ENCODE measurements at regions of chr11 and their contacts with region 1.

Region 1: GRCh38 chr11:96464700-96465307 is 75.0 kb downstream of the JRKL start:
- DNase-seq: peak; percentile 68
- ATAC-seq: peak; percentile 95
- H3K4me3 ChIP-seq: no peak overlapping the region
- H3K27ac ChIP-seq: no peak overlapping the region
- H3K4me1 ChIP-seq: no peaks in the 10 kb centered on the region
- H3K27me3 ChIP-seq: no peaks in the 10 kb centered on the region
- CTCF ChIP-seq: peak; percentile 78
- EP300 ChIP-seq: no peak
- POLR2A ChIP-seq: no peak
- RAD21 ChIP-seq: peak; percentile 24; the same call in 1 of the 2 replicates

Region 2: GRCh38 chr11:95119374-95120060 is 1345.3 kb before region 1 on chr11:
- CTCF ChIA-PET with region 1: no interaction called
- POLR2A ChIA-PET with region 1: no interaction called
- in situ Hi-C with region 1: no loop called
- intact Hi-C with region 1: no loop called
- DNase-seq: peak; percentile 10
- ATAC-seq: no peak
- H3K4me3 ChIP-seq: no peak overlapping the region
- H3K27ac ChIP-seq: no peak overlapping the region
- H3K4me1 ChIP-seq: no peaks in the 10 kb centered on the region
- H3K27me3 ChIP-seq: no peaks in the 10 kb centered on the region
- CTCF ChIP-seq: no peak
- EP300 ChIP-seq: no peak
- POLR2A ChIP-seq: no peak
- RAD21 ChIP-seq: no peak

Region 3: GRCh38 chr11:96307776-96308140 is 157.0 kb before region 1 on chr11:
- CTCF ChIA-PET with region 1: no interaction called
- POLR2A ChIA-PET with region 1: no interaction called
- in situ Hi-C with region 1: no loop called
- intact Hi-C with region 1: no loop called
- DNase-seq: no peak
- ATAC-seq: no peak
- H3K4me3 ChIP-seq: no peak overlapping the region
- H3K27ac ChIP-seq: no peak overlapping the region
- H3K4me1 ChIP-seq: peaks cover 45% of the 10 kb centered on the region
- H3K27me3 ChIP-seq: no peaks in the 10 kb centered on the region
- CTCF ChIP-seq: no peak
- EP300 ChIP-seq: no peak
- POLR2A ChIP-seq: no peak
- RAD21 ChIP-seq: no peak

Region 4: DNA sequence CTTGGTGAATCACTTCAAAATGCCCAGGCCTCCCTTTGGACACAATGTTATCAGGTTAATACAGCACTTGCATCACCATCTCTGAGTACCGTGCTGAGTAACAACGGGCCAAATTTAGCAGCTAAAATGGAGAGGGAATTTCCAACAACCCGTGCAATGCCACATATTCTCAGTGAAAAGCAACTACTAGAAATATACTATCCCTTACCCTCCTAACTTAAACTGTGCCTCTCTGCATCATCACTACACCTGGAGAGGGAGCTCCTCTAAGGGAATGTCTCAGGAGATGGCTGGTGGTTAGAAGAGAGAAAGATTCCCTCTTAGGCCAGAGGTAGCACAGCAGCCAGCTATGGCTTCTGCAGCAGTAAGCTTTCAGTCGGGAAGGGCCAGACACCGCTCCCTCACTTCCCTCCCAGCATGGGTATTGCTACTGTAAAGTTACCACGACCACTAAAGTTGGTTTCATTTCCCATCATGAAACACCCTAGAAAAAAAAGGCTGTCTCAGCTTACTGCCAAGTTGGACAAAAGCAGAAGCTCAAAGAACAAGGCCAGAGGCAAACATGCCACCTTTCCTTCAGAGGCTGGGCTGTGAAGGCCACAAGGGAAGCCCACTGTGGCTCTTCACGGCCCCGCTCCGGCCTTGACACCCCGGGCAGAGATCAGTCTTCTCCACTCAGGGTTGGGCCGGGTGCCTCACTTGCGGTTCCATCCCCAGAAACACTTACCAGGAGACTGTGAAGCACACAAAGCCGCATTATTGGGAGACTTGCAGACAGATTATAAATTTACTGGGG is 125.7 kb before region 1 on chr11:
- CTCF ChIA-PET with region 1: no interaction called
- POLR2A ChIA-PET with region 1: no interaction called
- in situ Hi-C with region 1: no loop called
- intact Hi-C with region 1: no loop called
- DNase-seq: peak; percentile 25
- ATAC-seq: peak; percentile 37
- H3K4me3 ChIP-seq: peak overlapping the region; percentile 59 to 84 (median 77)
- H3K27ac ChIP-seq: peak overlapping the region; percentile 80
- H3K4me1 ChIP-seq: peaks cover 83% of the 10 kb centered on the region
- H3K27me3 ChIP-seq: no peaks in the 10 kb centered on the region; a peak in 1 of 5 replicates
- CTCF ChIP-seq: no peak
- EP300 ChIP-seq: no peak
- POLR2A ChIP-seq: no peak
- RAD21 ChIP-seq: no peak

Region 5: DNA sequence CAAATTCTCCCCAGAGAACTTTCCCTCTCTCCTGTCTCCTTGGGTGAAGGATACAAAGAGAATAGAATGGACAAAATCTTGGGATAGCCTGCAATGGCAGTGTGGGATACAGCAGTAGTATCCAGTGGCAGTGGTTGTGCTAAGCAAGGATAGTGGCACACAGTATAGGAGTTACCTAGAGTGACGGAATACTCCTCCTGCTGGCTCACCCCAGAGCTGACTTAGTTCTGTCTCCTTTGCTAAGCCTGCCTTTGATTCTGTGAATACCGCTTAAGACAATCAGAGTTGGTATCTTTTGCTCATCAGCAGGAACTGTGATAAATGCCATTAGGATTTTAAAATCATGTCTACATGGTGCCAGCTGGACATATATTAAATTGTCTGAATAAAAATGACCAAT is 329.3 kb after region 1 on chr11:
- CTCF ChIA-PET with region 1: no interaction called
- POLR2A ChIA-PET with region 1: no interaction called
- in situ Hi-C with region 1: no loop called
- intact Hi-C with region 1: loop called (anchors 2 kb)
- DNase-seq: no peak
- ATAC-seq: peak; percentile 76
- H3K4me3 ChIP-seq: no peak overlapping the region
- H3K27ac ChIP-seq: no peak overlapping the region
- H3K4me1 ChIP-seq: no peaks in the 10 kb centered on the region
- H3K27me3 ChIP-seq: no peaks in the 10 kb centered on the region
- CTCF ChIP-seq: 0 out of 2 replicates have a peak, but pooled peaks have one; percentile 16
- EP300 ChIP-seq: no peak
- POLR2A ChIP-seq: no peak
- RAD21 ChIP-seq: no peak

Region 6: DNA sequence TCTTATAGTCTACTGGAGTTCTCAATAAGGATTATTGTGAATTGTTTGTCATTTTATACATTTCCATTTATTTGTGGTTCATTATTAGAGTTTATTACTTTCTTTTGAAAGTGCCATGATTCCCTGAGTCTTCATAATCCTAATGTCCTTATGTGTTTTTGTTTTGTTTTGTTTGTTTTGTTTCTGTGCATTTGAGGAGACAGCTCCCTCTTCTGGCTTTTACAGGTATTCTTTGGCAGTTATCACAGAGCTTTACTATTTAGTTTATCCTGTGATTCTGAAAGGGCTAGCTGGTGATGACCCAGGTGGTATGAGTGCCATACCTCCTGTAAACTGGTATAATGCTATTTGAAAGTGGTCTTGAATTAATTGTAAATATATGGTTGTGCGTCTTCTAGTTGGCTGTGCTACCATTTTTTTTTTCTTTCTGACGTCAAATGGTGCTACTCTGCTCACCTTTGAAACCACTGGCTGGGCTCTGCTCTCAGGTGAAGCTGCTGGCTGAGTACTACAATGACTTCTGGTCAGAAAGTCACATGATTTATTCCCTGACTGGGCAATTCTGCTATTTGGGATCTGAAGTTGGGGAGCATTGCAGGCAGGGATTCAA is 676.2 kb after region 1 on chr11:
- CTCF ChIA-PET with region 1: interaction called, 44 read pairs
- POLR2A ChIA-PET with region 1: interaction called, 3 read pairs
- in situ Hi-C with region 1: loop called (anchors 5 kb)
- intact Hi-C with region 1: loop called (anchors 1 kb)
- DNase-seq: peak; percentile 16
- ATAC-seq: peak; percentile 74
- H3K4me3 ChIP-seq: no peak overlapping the region
- H3K27ac ChIP-seq: no peak overlapping the region
- H3K4me1 ChIP-seq: no peaks in the 10 kb centered on the region
- H3K27me3 ChIP-seq: no peaks in the 10 kb centered on the region
- CTCF ChIP-seq: peak; percentile 40
- EP300 ChIP-seq: no peak
- POLR2A ChIP-seq: no peak
- RAD21 ChIP-seq: 0 out of 2 replicates have a peak, but pooled peaks have one; percentile 10